ENCODE measurements at regions of chr13 and their contacts with region 1.

Region 1: GRCh38 chr13:73708393-73708985 is 425.7 kb downstream of the KLF12 start:
- DNase-seq: peak; percentile 10 to 86 (median 44)
- ATAC-seq: peak; percentile 99
- H3K4me3 ChIP-seq: no peak overlapping the region
- H3K4me3 Mint-ChIP-seq: no peak overlapping the region
- H3K27ac ChIP-seq: no peak overlapping the region
- H3K27ac Mint-ChIP-seq: peak overlapping the region; percentile 67
- H3K4me1 ChIP-seq: peaks cover 7% of the 10 kb centered on the region
- H3K4me1 Mint-ChIP-seq: peaks cover 24% of the 10 kb centered on the region
- H3K27me3 ChIP-seq: no peaks in the 10 kb centered on the region
- H3K27me3 Mint-ChIP-seq: no peaks in the 10 kb centered on the region
- CTCF ChIP-seq: peak; percentile 96

Region 2: GRCh38 chr13:72839831-72840426 is 868.6 kb before region 1 on chr13:
- CTCF ChIA-PET with region 1: no interaction called
- POLR2A ChIA-PET with region 1: no interaction called
- intact Hi-C with region 1: loop called (anchors 1 to 5 kb)
- DNase-seq: peak in 13 of 14 experiments; percentile 6 to 62 (median 20)
- ATAC-seq: peak; percentile 61
- H3K4me3 ChIP-seq: no peak overlapping the region
- H3K4me3 Mint-ChIP-seq: no peak overlapping the region
- H3K27ac ChIP-seq: no peak overlapping the region
- H3K27ac Mint-ChIP-seq: no peak overlapping the region
- H3K4me1 ChIP-seq: no peaks in the 10 kb centered on the region
- H3K4me1 Mint-ChIP-seq: no peaks in the 10 kb centered on the region
- H3K27me3 ChIP-seq: no peaks in the 10 kb centered on the region
- H3K27me3 Mint-ChIP-seq: no peaks in the 10 kb centered on the region
- CTCF ChIP-seq: peak; percentile 61

Region 3: GRCh38 chr13:73058736-73059459 is 649.6 kb before region 1 on chr13 and contains the start of gene KLF5:
- CTCF ChIA-PET with region 1: interaction called, 3 read pairs
- POLR2A ChIA-PET with region 1: interaction called, 5 read pairs
- intact Hi-C with region 1: loop called (anchors 2 to 5 kb)
- DNase-seq: peak; percentile 90 to 97 (median 95)
- ATAC-seq: peak; percentile 94
- H3K4me3 ChIP-seq: peak within 1 kb of the TSS; percentile 63
- H3K4me3 Mint-ChIP-seq: peak within 1 kb of the TSS; percentile 96
- H3K27ac ChIP-seq: no peak within 1 kb of the TSS
- H3K27ac Mint-ChIP-seq: peak within 1 kb of the TSS; percentile 75
- H3K4me1 ChIP-seq: peaks cover 17% of the 10 kb centered on the region
- H3K4me1 Mint-ChIP-seq: peaks cover 22% of the 10 kb centered on the region
- H3K27me3 ChIP-seq: peaks cover 6 to 26% of the 10 kb centered on the region in 2 experiments
- H3K27me3 Mint-ChIP-seq: peaks cover 32% of the 10 kb centered on the region
- CTCF ChIP-seq: no peak
- total RNA-seq, gene KLF5: 10.8 to 12.3 TPM

Region 4: GRCh38 chr13:73335221-73335620 is 373.3 kb before region 1 on chr13:
- CTCF ChIA-PET with region 1: no interaction called
- POLR2A ChIA-PET with region 1: no interaction called
- intact Hi-C with region 1: loop called in 1 of 2 experiments (anchors 10 kb)
- DNase-seq: peak in 2 of 14 experiments; percentile 1 to 34
- ATAC-seq: no peak
- H3K4me3 ChIP-seq: no peak overlapping the region
- H3K4me3 Mint-ChIP-seq: no peak overlapping the region
- H3K27ac ChIP-seq: no peak overlapping the region
- H3K27ac Mint-ChIP-seq: no peak overlapping the region
- H3K4me1 ChIP-seq: no peaks in the 10 kb centered on the region
- H3K4me1 Mint-ChIP-seq: no peaks in the 10 kb centered on the region
- H3K27me3 ChIP-seq: no peaks in the 10 kb centered on the region
- H3K27me3 Mint-ChIP-seq: no peaks in the 10 kb centered on the region
- CTCF ChIP-seq: no peak

Region 5: GRCh38 chr13:73754727-73755292 is 46.3 kb after region 1 on chr13:
- CTCF ChIA-PET with region 1: no interaction called
- POLR2A ChIA-PET with region 1: no interaction called
- intact Hi-C with region 1: loop called in 1 of 2 experiments (anchors 5 kb)
- DNase-seq: peak in 7 of 14 experiments; percentile 4 to 78 (median 59)
- ATAC-seq: peak; percentile 60
- H3K4me3 ChIP-seq: no peak overlapping the region
- H3K4me3 Mint-ChIP-seq: no peak overlapping the region
- H3K27ac ChIP-seq: no peak overlapping the region
- H3K27ac Mint-ChIP-seq: peak overlapping the region; percentile 21
- H3K4me1 ChIP-seq: peaks cover 2% of the 10 kb centered on the region
- H3K4me1 Mint-ChIP-seq: peaks cover 62% of the 10 kb centered on the region
- H3K27me3 ChIP-seq: no peaks in the 10 kb centered on the region
- H3K27me3 Mint-ChIP-seq: no peaks in the 10 kb centered on the region
- CTCF ChIP-seq: peak; percentile 86

Region 6: DNA sequence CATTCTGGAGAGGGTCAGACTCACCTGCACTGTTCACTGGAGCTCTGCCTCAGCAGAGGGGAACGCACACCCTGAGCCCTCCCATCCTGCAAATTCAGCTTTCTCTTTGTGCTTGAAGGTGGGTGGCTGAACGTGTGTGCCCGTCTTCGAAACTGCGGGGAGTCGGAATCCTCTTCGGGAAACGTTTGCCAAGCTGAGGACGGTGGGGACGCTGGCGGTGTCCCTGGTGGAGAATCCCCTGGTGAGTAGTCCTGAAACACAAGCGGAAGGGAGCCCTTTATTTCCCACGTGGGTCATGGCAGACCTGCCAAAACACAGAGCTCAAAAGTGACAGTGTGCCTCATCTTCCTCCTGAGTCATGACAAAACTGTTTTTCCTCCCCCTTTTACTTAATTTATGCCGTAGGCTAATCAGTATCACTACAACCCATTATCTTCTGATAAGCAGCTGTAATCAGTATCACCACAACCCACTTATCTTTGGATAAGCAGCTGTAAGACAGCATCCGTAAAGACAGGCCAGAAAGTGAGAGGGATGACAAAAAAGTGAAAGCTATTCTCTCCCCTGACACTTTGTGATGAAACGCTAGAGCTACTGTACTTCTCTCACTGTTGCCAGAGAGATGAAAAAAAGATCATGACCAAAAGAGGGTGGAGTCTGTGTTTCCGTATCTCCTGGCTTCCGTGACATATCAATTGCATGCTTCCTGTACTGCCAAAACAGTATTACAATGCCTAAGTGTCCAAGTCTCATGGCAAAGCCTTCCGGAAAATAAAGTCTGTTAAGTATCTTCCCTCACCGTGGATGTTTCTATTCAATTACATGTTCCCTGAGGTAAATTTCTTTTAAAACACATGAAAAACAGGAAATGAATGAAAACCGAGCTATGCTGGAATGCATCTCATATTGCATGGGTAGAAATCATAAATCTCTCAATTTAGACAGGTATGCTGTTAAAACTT is 1618.0 kb after region 1 on chr13:
- CTCF ChIA-PET with region 1: no interaction called
- POLR2A ChIA-PET with region 1: no interaction called
- intact Hi-C with region 1: loop called in 1 of 2 experiments (anchors 10 kb)
- DNase-seq: peak; percentile 12 to 92 (median 40)
- ATAC-seq: peak; percentile 86
- H3K4me3 ChIP-seq: peak overlapping the region; percentile 75
- H3K4me3 Mint-ChIP-seq: peak overlapping the region; percentile 92
- H3K27ac ChIP-seq: peak overlapping the region; percentile 89 to 93
- H3K27ac Mint-ChIP-seq: peak overlapping the region; percentile 93
- H3K4me1 ChIP-seq: peaks cover 5% of the 10 kb centered on the region
- H3K4me1 Mint-ChIP-seq: peaks cover 57% of the 10 kb centered on the region
- H3K27me3 ChIP-seq: no peaks in the 10 kb centered on the region
- H3K27me3 Mint-ChIP-seq: no peaks in the 10 kb centered on the region
- CTCF ChIP-seq: no peak